Activated CD4-positive, alpha-beta T cell treated with anti-CD3 and anti-CD28 coated beads, Interleukin-2, amount 10 ng/mL, durations not matched to agents 7 days and 5 days (primary cell): ENCODE measurements at regions of chr3 and their contacts with region 1.

Region 1: DNA sequence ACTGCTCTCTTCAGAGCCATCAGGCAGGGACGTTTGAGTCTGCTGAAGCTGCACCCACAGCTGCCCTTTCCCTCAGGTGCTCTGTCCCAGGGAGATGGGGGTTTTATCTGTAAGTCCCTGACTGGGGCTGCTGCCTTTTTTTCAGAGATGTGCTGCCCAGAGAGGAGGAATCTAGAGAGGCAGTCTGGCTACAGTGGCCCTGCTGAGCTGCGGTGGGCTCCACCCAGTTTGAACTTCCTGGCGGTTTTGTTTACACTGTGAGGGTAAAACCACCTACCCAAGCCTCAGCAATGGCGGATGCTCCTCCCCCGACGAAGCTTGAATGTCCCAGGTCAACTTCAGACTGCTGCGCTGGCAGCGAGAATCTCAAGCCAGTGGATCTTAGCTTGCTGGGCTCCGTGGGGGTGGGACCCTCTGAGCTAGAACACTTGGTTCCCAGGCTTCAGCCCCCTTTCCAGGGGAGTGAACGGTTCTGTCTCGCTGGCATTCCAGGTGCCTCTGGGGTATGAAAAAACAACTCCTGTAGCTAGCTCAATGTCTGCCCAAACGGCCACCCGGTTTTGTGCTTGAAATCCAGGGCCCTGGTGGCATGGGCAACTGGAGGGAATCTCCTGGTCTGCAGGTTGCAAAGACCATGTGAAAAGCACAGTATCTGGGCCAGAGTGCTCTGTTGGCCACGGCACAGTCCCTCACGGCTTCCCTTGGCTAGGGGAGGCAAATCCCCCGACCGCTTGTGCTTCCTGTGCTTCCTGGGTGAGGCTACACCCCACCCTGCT is 21.1 kb upstream of the ST6GAL1 start:
- DNase-seq: peak; percentile 90
- H3K4me3 Mint-ChIP-seq: peak overlapping the region; percentile 45
- H3K27ac Mint-ChIP-seq: peak overlapping the region; percentile 96
- H3K4me1 Mint-ChIP-seq: peaks cover 53% of the 10 kb centered on the region
- H3K27me3 Mint-ChIP-seq: peaks cover 2% of the 10 kb centered on the region

Region 2: GRCh38 chr3:186920301-186920700 is 11.0 kb after region 1 on chr3:
- CTCF ChIA-PET with region 1: interaction called, 24 read pairs
- POLR2A ChIA-PET with region 1: interaction called, 3 read pairs
- DNase-seq: no peak
- H3K4me3 Mint-ChIP-seq: no peak overlapping the region
- H3K27ac Mint-ChIP-seq: no peak overlapping the region
- H3K4me1 Mint-ChIP-seq: peaks cover 35% of the 10 kb centered on the region
- H3K27me3 Mint-ChIP-seq: no peaks in the 10 kb centered on the region

Region 3: DNA sequence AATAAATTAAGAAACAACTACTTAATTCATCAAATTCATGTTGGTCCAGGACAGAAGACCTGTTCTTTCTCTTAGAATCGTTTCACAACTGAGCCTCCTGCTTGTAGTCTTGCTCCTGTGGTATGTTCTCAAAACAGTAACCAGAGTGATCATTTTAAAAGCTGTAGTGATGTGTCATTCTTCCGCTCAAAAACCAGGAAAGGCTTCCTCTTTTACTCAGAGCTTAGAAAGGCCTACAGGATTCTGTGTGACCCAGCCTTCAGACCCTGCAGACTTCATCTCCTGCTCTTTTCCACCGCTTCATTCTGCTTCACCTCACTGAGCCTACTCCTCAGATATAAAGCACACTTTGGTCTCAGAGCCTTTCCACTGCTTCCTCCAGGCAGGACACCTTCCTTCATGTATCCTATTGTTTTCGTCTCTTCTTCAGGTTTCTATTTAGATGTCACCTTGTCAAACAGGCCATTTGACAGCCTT is 43.8 kb after region 1 on chr3:
- CTCF ChIA-PET with region 1: no interaction called
- POLR2A ChIA-PET with region 1: no interaction called
- DNase-seq: peak; percentile 11
- H3K4me3 Mint-ChIP-seq: peak overlapping the region; percentile 31
- H3K27ac Mint-ChIP-seq: peak overlapping the region; percentile 85
- H3K4me1 Mint-ChIP-seq: peaks cover 66% of the 10 kb centered on the region
- H3K27me3 Mint-ChIP-seq: no peaks in the 10 kb centered on the region